CD4-positive, alpha-beta T cell (primary cell): ENCODE measurements at regions of chr15 and their contacts with region 1.

Region 1: DNA sequence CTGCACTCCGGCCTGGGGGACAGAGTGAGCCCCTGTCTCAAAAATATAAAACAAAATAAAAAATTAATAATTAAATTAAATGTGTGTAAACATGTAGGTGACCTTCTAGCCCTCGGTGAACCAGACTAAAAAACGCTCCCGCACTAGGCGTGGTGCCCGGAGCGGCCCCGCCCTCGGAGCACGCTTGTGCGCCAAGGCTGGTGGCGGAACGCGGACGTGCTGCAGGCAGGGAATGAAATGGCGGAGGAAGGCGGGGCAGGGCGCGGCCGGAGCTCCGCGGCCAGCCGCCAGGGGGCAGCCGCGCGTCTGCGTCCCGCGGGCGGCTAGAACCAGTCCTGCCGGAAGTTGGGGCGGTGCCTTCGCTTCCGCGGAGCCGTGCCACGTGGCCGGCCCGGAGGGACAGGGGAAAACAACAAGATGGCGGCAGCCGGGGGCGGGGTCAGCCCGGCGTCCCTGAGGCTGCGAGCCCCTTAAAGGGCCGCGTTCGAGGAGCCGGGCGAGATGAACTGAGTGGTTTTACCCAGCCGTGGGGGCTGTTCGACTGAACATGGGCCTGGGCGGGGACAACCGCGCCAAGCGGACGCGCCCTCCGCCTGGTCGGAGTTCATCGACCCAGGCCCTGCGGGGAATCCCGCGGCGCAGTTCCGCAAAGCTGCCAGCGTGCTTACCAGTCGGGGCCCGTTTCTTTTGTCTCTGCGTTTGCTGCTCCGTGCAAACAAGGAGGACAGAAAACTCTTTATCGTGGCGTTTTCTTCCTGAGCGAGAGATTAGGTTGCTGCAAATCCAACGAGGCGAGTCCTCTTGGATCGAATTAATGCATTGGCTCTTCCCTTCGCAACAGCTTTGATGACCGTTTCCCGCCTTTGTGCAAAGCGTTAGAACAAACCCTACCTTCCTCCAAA is 90.9 kb upstream of the CHD2 start:
- DNase-seq: peak; percentile 96 to 100 (median 98)
- ATAC-seq: peak; percentile 70
- H3K4me3 ChIP-seq: peak overlapping the region; percentile 59
- H3K4me3 Mint-ChIP-seq: peak overlapping the region; percentile 82
- H3K27ac ChIP-seq: peak overlapping the region; percentile 95 to 98
- H3K27ac Mint-ChIP-seq: peak overlapping the region; percentile 100
- H3K4me1 ChIP-seq: peaks cover 52% of the 10 kb centered on the region
- H3K4me1 Mint-ChIP-seq: peaks cover 63% of the 10 kb centered on the region
- H3K27me3 ChIP-seq: no peaks in the 10 kb centered on the region
- H3K27me3 Mint-ChIP-seq: no peaks in the 10 kb centered on the region
- CTCF ChIP-seq: peak; percentile 75

Region 2: DNA sequence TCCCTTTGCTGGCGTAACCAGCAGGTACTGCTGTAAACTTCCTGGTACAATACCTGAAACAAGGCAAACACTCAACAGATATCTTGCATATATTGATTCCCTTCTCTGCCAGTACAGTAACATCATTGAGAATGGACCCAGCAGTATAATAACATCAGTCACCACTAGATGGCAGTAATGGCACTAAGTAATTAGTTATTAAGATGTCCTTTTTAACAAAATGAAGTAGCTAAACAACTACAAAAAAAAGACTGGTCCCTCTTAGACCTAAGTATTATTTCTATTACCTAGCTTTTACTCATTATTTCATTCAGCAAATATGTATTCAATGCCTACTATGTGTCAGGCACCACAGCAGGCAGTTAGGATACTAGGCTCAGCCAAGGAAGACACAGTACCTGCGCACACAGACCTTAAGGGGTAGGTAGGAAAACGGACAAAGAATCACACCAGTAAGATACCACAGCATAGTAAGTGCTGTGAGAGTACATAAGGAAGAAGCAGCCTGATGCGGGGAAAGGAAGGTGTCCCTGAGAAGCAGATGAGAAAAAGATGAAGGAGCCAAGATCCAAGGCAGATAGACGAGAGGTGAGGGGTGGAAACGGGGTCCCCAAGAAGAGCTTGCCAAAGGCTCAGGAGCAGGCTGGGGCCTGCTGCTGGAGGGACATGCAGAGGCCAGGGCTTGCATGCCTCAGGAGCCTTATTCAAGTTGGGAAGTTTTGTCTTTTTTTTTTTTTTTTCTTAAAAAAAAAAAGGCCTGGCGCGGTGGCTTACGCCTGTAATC is 11.9 kb before region 1 on chr15:
- CTCF ChIA-PET with region 1: interaction called, 27 read pairs
- POLR2A ChIA-PET with region 1: interaction called, 35 read pairs
- intact Hi-C with region 1: loop called in 1 of 2 experiments (anchors 1 kb)
- DNase-seq: peak in 5 of 14 experiments; percentile 26 to 89 (median 83)
- ATAC-seq: peak; percentile 95
- H3K4me3 ChIP-seq: no peak overlapping the region
- H3K4me3 Mint-ChIP-seq: no peak overlapping the region
- H3K27ac ChIP-seq: no peak overlapping the region
- H3K27ac Mint-ChIP-seq: peak overlapping the region; percentile 31
- H3K4me1 ChIP-seq: peaks cover 10% of the 10 kb centered on the region
- H3K4me1 Mint-ChIP-seq: peaks cover 10% of the 10 kb centered on the region
- H3K27me3 ChIP-seq: no peaks in the 10 kb centered on the region
- H3K27me3 Mint-ChIP-seq: no peaks in the 10 kb centered on the region
- CTCF ChIP-seq: peak; percentile 73

Region 3: GRCh38 chr15:92831655-92832328 is 22.6 kb after region 1 on chr15:
- CTCF ChIA-PET with region 1: interaction called, 80 read pairs
- POLR2A ChIA-PET with region 1: interaction called, 160 read pairs
- intact Hi-C with region 1: loop called (anchors 1 kb)
- DNase-seq: peak; percentile 73 to 95 (median 89)
- ATAC-seq: peak; percentile 91
- H3K4me3 ChIP-seq: peak overlapping the region; percentile 33
- H3K4me3 Mint-ChIP-seq: peak overlapping the region; percentile 73
- H3K27ac ChIP-seq: peak overlapping the region; percentile 85 to 96
- H3K27ac Mint-ChIP-seq: peak overlapping the region; percentile 98
- H3K4me1 ChIP-seq: peaks cover 46% of the 10 kb centered on the region
- H3K4me1 Mint-ChIP-seq: peaks cover 57% of the 10 kb centered on the region
- H3K27me3 ChIP-seq: no peaks in the 10 kb centered on the region
- H3K27me3 Mint-ChIP-seq: no peaks in the 10 kb centered on the region
- CTCF ChIP-seq: no peak

Region 4: GRCh38 chr15:92845126-92845508 is 35.9 kb after region 1 on chr15:
- CTCF ChIA-PET with region 1: interaction called, 16 read pairs
- POLR2A ChIA-PET with region 1: interaction called, 40 read pairs
- intact Hi-C with region 1: loop called (anchors 1 to 5 kb)
- DNase-seq: peak in 3 of 14 experiments; percentile 76 to 84 (median 81)
- ATAC-seq: peak; percentile 46
- H3K4me3 ChIP-seq: peak overlapping the region; percentile 31
- H3K4me3 Mint-ChIP-seq: peak overlapping the region; percentile 88
- H3K27ac ChIP-seq: peak overlapping the region; percentile 37 to 75
- H3K27ac Mint-ChIP-seq: peak overlapping the region; percentile 91
- H3K4me1 ChIP-seq: peaks cover 79% of the 10 kb centered on the region
- H3K4me1 Mint-ChIP-seq: peaks cover 63% of the 10 kb centered on the region
- H3K27me3 ChIP-seq: no peaks in the 10 kb centered on the region
- H3K27me3 Mint-ChIP-seq: no peaks in the 10 kb centered on the region
- CTCF ChIP-seq: no peak

Region 5: GRCh38 chr15:92903941-92904831 is 95.0 kb after region 1 on chr15:
- CTCF ChIA-PET with region 1: interaction called, 59 read pairs
- POLR2A ChIA-PET with region 1: interaction called, 449 read pairs
- intact Hi-C with region 1: loop called in 1 of 2 experiments (anchors 1 kb)
- DNase-seq: peak; percentile 97 to 100 (median 98)
- ATAC-seq: peak; percentile 78
- H3K4me3 ChIP-seq: peak overlapping the region; percentile 74
- H3K4me3 Mint-ChIP-seq: peak overlapping the region; percentile 96
- H3K27ac ChIP-seq: peak overlapping the region; percentile 97
- H3K27ac Mint-ChIP-seq: peak overlapping the region; percentile 99
- H3K4me1 ChIP-seq: peaks cover 31% of the 10 kb centered on the region
- H3K4me1 Mint-ChIP-seq: peaks cover 73% of the 10 kb centered on the region
- H3K27me3 ChIP-seq: no peaks in the 10 kb centered on the region
- H3K27me3 Mint-ChIP-seq: no peaks in the 10 kb centered on the region
- CTCF ChIP-seq: no peak

Region 6: DNA sequence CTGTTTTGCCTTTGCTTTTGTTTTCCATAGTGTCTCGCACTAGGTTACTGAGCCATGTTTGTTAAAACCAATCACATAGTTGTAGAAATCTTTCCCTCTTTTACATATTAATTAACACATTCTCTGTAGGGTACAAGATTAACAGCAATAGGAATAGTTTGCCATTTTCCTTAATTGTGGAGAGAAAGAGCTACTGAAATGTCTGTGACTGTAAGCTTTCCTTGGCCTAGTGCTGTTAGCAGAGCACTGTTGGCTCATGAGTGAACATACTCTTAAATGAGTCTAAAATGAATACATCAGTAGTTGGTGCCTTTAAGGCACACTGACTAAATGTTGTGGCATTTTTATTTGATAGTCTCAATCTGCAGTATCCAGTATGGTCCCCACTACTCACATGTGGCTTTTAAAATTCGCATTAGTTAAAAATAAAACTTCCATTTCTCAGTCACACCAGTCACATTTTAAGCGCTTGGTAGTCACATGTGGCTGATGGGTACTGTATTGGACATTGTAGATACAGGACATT is 119.1 kb after region 1 on chr15:
- CTCF ChIA-PET with region 1: interaction called, 7 read pairs
- POLR2A ChIA-PET with region 1: interaction called, 12 read pairs
- intact Hi-C with region 1: no loop called
- DNase-seq: no peak
- ATAC-seq: no peak
- H3K4me3 ChIP-seq: no peak overlapping the region
- H3K4me3 Mint-ChIP-seq: no peak overlapping the region
- H3K27ac ChIP-seq: no peak overlapping the region
- H3K27ac Mint-ChIP-seq: peak overlapping the region; percentile 57
- H3K4me1 ChIP-seq: peaks cover 21% of the 10 kb centered on the region
- H3K4me1 Mint-ChIP-seq: peaks cover 79% of the 10 kb centered on the region
- H3K27me3 ChIP-seq: no peaks in the 10 kb centered on the region
- H3K27me3 Mint-ChIP-seq: no peaks in the 10 kb centered on the region
- CTCF ChIP-seq: no peak